Activated CD4-positive, alpha-beta T cell treated with anti-CD3 and anti-CD28 coated beads for 36 hours (primary cell): ENCODE measurements at regions of chr17 and their contacts with region 1.

Region 1: DNA sequence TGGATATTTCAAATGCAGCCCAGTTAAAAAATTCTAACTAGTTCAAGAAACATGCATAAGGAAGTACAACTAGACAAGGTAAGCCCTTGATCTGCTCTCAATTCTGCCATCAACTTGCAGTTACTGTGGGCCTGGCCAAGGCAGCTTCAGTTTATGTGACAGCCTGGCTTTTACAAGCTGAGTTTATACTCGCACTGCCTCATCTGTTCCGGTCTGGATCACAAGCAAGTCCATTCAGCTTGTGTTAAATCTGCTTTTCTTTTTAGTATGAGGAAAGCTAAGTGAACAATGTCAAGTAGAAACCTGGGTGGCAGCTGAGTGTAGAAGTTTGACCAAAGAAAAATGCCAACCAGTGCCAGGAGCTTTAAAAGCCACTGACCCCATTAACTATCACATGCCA is 76.6 kb upstream of the CORO6 start:
- DNase-seq: no peak
- ATAC-seq: no peak
- H3K4me3 Mint-ChIP-seq: no peak overlapping the region
- H3K27ac Mint-ChIP-seq: no peak overlapping the region
- H3K4me1 Mint-ChIP-seq: peaks cover 17% of the 10 kb centered on the region
- H3K27me3 Mint-ChIP-seq: no peaks in the 10 kb centered on the region

Region 2: GRCh38 chr17:29622337-29623282 is 76.7 kb before region 1 on chr17 and contains the start of gene CORO6:
- CTCF ChIA-PET with region 1: interaction called, 8 read pairs
- POLR2A ChIA-PET with region 1: no interaction called
- intact Hi-C with region 1: loop called in 1 of 2 experiments (anchors 5 kb)
- DNase-seq: peak; percentile 83
- ATAC-seq: peak; percentile 55
- H3K4me3 Mint-ChIP-seq: peak within 1 kb of the TSS; percentile 62
- H3K27ac Mint-ChIP-seq: peak within 1 kb of the TSS; percentile 91
- H3K4me1 Mint-ChIP-seq: peaks cover 52% of the 10 kb centered on the region
- H3K27me3 Mint-ChIP-seq: no peaks in the 10 kb centered on the region
- total RNA-seq, gene CORO6: 13.9 to 14.2 TPM

Region 3: GRCh38 chr17:29747660-29748059 is 48.4 kb after region 1 on chr17:
- CTCF ChIA-PET with region 1: interaction called, 3 read pairs
- POLR2A ChIA-PET with region 1: no interaction called
- intact Hi-C with region 1: loop called in 1 of 2 experiments (anchors 5 kb)
- DNase-seq: no peak
- ATAC-seq: no peak
- H3K4me3 Mint-ChIP-seq: no peak overlapping the region
- H3K27ac Mint-ChIP-seq: no peak overlapping the region
- H3K4me1 Mint-ChIP-seq: peaks cover 58% of the 10 kb centered on the region
- H3K27me3 Mint-ChIP-seq: no peaks in the 10 kb centered on the region

Region 4: DNA sequence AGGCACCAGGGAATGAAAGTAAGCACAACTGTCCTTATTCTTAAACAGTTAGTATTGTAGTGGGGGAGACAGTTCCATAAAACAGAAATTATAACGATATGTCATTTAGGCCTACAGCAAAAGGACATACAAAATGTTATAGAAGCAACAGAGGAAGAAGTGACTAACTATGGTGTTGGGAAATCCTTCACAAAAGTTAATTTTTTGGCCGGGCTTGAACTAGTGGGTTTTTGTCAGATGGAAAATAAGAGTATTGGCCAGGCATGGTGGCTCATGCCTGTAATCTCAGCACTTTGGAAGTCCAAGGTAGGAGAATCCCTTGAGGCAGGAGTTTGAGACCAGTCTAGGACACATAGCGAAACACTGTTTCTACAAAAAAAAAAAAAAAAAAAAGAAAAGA is 103.0 kb after region 1 on chr17:
- CTCF ChIA-PET with region 1: no interaction called
- POLR2A ChIA-PET with region 1: no interaction called
- intact Hi-C with region 1: no loop called
- DNase-seq: no peak
- ATAC-seq: no peak
- H3K4me3 Mint-ChIP-seq: no peak overlapping the region
- H3K27ac Mint-ChIP-seq: no peak overlapping the region
- H3K4me1 Mint-ChIP-seq: no peaks in the 10 kb centered on the region
- H3K27me3 Mint-ChIP-seq: no peaks in the 10 kb centered on the region